ENCODE measurements at regions of chr11 and their contacts with region 1.

Region 1: GRCh38 chr11:70467201-70468085 is 69.1 kb downstream of the CTTN start:
- DNase-seq: peak in 1 of 2 experiments; percentile 70
- H3K4me3 ChIP-seq: no peak overlapping the region
- H3K27ac ChIP-seq: no peak overlapping the region
- H3K4me1 ChIP-seq: no peaks in the 10 kb centered on the region
- H3K27me3 ChIP-seq: no peaks in the 10 kb centered on the region
- CTCF ChIP-seq: peak; percentile 99

Region 2: GRCh38 chr11:70755410-70756161 is 288.1 kb after region 1 on chr11:
- CTCF ChIA-PET with region 1: no interaction called
- POLR2A ChIA-PET with region 1: interaction called, 4 read pairs
- intact Hi-C with region 1: loop called (anchors 1 kb)
- DNase-seq: peak; percentile 60 to 84
- H3K4me3 ChIP-seq: no peak overlapping the region
- H3K27ac ChIP-seq: no peak overlapping the region
- H3K4me1 ChIP-seq: peaks cover 9% of the 10 kb centered on the region
- H3K27me3 ChIP-seq: no peaks in the 10 kb centered on the region
- CTCF ChIP-seq: peak; percentile 92

Region 3: GRCh38 chr11:70815485-70815861 is 348.0 kb after region 1 on chr11:
- CTCF ChIA-PET with region 1: no interaction called
- POLR2A ChIA-PET with region 1: no interaction called
- intact Hi-C with region 1: loop called (anchors 1 kb)
- DNase-seq: no peak
- H3K4me3 ChIP-seq: no peak overlapping the region
- H3K27ac ChIP-seq: no peak overlapping the region
- H3K4me1 ChIP-seq: no peaks in the 10 kb centered on the region
- H3K27me3 ChIP-seq: no peaks in the 10 kb centered on the region
- CTCF ChIP-seq: no peak

Region 4: GRCh38 chr11:71080239-71081097 is 613.0 kb after region 1 on chr11:
- CTCF ChIA-PET with region 1: no interaction called
- POLR2A ChIA-PET with region 1: no interaction called
- intact Hi-C with region 1: loop called (anchors 1 kb)
- DNase-seq: peak; percentile 71 to 82
- H3K4me3 ChIP-seq: no peak overlapping the region
- H3K27ac ChIP-seq: no peak overlapping the region
- H3K4me1 ChIP-seq: peaks cover 6% of the 10 kb centered on the region; the same call in 1 of the 2 replicates
- H3K27me3 ChIP-seq: no peaks in the 10 kb centered on the region
- CTCF ChIP-seq: peak; percentile 91

Measured in PC-9 (cell line).